Activated CD4-positive, alpha-beta T cell treated with anti-CD3 and anti-CD28 coated beads, Interleukin-2, amount 10 ng/mL, durations not matched to agents 24 days and 14 days (primary cell): ENCODE measurements at regions of chr13 and their contacts with region 1.

Region 1: DNA sequence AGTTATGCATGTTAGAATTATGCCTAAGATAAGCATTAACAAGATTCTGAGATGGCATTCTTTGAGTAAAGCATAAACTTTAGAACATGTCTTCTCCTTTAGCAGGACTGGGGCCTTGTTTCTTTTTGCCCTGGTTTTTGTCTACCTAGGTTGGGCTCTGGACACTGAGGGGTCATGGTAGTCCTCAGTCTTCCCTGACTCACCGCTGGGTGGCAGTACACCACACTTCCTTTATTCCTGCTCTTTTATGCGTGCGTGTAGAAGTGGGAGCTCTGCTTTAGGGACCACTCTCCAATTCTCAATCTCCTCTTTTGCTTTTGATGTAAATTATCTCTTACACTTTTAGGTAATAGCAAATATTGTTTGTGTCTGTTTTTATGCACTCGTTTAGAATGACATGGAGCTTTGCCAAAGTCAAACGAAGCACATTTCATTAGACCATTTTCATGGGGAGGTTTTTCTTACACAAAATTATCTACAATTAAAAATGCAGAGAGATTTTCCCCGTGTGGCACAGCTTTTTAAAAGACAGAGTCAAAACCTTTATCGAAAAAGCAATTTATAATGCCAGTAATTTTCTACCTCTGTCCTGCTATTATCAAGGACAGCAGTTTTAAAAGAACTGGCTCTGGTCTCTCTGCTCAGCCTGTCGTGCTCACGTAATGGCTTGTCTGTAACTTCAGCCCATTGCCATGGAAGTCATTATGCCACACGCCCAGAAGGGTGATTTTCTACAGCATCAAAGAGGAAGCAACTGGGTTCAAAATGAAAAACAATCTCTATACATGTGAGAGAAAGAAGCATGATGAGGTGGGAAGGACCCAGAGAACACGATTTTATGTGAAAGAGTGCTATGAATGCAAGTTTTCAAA is 413.9 kb downstream of the COG6 start:
- DNase-seq: peak; percentile 90
- H3K4me3 Mint-ChIP-seq: no peak overlapping the region
- H3K27ac Mint-ChIP-seq: no peak overlapping the region
- H3K4me1 Mint-ChIP-seq: peaks cover 25% of the 10 kb centered on the region
- H3K27me3 Mint-ChIP-seq: no peaks in the 10 kb centered on the region

Region 2: GRCh38 chr13:39684531-39685137 is 384.8 kb before region 1 on chr13:
- intact Hi-C with region 1: loop called (anchors 10 kb)
- DNase-seq: no peak
- H3K4me3 Mint-ChIP-seq: no peak overlapping the region
- H3K27ac Mint-ChIP-seq: no peak overlapping the region
- H3K4me1 Mint-ChIP-seq: peaks cover 18% of the 10 kb centered on the region
- H3K27me3 Mint-ChIP-seq: no peaks in the 10 kb centered on the region

Region 3: DNA sequence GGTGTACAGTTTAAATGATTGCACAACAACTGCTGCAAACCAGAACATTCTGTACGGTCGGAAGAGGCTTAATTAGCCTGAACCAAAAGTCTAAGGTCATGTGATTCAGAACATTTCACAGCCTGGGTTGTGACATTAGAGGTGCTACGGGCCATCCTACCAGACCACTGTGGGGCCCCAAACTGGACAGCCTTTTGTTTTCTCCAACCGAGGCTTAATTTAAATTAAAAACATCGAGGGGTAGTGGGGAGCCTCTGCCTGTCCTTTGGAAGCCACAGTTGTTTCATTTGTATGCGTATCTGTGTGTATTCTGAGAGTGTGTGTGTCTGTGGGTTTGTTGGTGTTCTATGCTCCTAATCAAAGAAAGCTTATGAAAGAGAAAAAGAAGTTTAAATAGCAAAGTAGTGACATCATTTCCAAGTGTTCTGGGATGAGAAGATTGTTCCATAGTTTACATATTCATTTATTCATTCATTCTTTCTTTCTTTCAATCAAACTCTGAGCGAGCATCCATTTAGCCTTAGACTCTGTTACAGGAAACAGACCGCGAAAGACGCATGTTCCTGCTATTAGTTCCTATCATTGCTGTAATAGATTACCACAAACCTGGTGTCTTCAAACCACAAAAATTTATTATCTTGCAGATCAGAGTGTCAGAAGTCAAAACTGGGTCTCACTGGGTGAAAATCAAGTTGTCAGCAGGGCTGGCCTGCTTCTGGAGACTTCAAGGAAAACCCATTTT is 152.2 kb after region 1 on chr13:
- intact Hi-C with region 1: loop called (anchors 5 kb)
- DNase-seq: peak; percentile 74
- H3K4me3 Mint-ChIP-seq: peak overlapping the region; percentile 49
- H3K27ac Mint-ChIP-seq: peak overlapping the region; percentile 45
- H3K4me1 Mint-ChIP-seq: peaks cover 36% of the 10 kb centered on the region
- H3K27me3 Mint-ChIP-seq: no peaks in the 10 kb centered on the region

Region 4: GRCh38 chr13:40682449-40683240 is 613.2 kb after region 1 on chr13:
- intact Hi-C with region 1: loop called (anchors 2 kb)
- DNase-seq: no peak
- H3K4me3 Mint-ChIP-seq: no peak overlapping the region
- H3K27ac Mint-ChIP-seq: no peak overlapping the region
- H3K4me1 Mint-ChIP-seq: peaks cover 13% of the 10 kb centered on the region
- H3K27me3 Mint-ChIP-seq: no peaks in the 10 kb centered on the region